SK-N-SH (cell line): ENCODE measurements at regions of chr14 and their contacts with region 1.

Region 1: GRCh38 chr14:71753126-71753830 is 179.0 kb upstream of the RGS6 start:
- DNase-seq: peak; percentile 84
- H3K4me3 ChIP-seq: peak overlapping the region; percentile 14 to 28; a peak in 2 of 4 replicates
- H3K27ac ChIP-seq: no peak overlapping the region
- H3K4me1 ChIP-seq: peaks cover 5 to 6% of the 10 kb centered on the region in 2 experiments; a peak in 2 of 4 replicates
- H3K27me3 ChIP-seq: no peaks in the 10 kb centered on the region
- CTCF ChIP-seq: peak; percentile 97
- EP300 ChIP-seq: peak in 1 of 2 experiments; percentile 7; a peak in 1 of 4 replicates
- RAD21 ChIP-seq: peak; percentile 100

Region 2: GRCh38 chr14:71138448-71139293 is 614.6 kb before region 1 on chr14:
- CTCF ChIA-PET with region 1: interaction called, 198 read pairs
- POLR2A ChIA-PET with region 1: no interaction called
- DNase-seq: peak; percentile 85
- H3K4me3 ChIP-seq: no peak overlapping the region; a peak in 1 of 4 replicates
- H3K27ac ChIP-seq: no peak overlapping the region
- H3K4me1 ChIP-seq: peaks cover 4 to 11% of the 10 kb centered on the region in 2 experiments; a peak in 2 of 4 replicates
- H3K27me3 ChIP-seq: no peaks in the 10 kb centered on the region
- CTCF ChIP-seq: peak; percentile 95
- EP300 ChIP-seq: no peak
- RAD21 ChIP-seq: peak; percentile 93

Region 3: GRCh38 chr14:71328183-71328582 is 425.1 kb before region 1 on chr14:
- CTCF ChIA-PET with region 1: interaction called, 44 read pairs
- POLR2A ChIA-PET with region 1: no interaction called
- DNase-seq: no peak
- H3K4me3 ChIP-seq: no peak overlapping the region
- H3K27ac ChIP-seq: no peak overlapping the region
- H3K4me1 ChIP-seq: peaks cover 8 to 19% of the 10 kb centered on the region in 2 experiments; a peak in 3 of 4 replicates
- H3K27me3 ChIP-seq: no peaks in the 10 kb centered on the region
- CTCF ChIP-seq: no peak
- EP300 ChIP-seq: no peak
- RAD21 ChIP-seq: no peak

Region 4: GRCh38 chr14:71720978-71721624 is 32.2 kb before region 1 on chr14:
- CTCF ChIA-PET with region 1: interaction called, 28 read pairs
- POLR2A ChIA-PET with region 1: no interaction called
- DNase-seq: peak; percentile 32
- H3K4me3 ChIP-seq: no peak overlapping the region
- H3K27ac ChIP-seq: no peak overlapping the region
- H3K4me1 ChIP-seq: peaks cover 12 to 24% of the 10 kb centered on the region in 2 experiments
- H3K27me3 ChIP-seq: no peaks in the 10 kb centered on the region
- CTCF ChIP-seq: peak; percentile 69
- EP300 ChIP-seq: no peak
- RAD21 ChIP-seq: peak; percentile 67

Region 5: DNA sequence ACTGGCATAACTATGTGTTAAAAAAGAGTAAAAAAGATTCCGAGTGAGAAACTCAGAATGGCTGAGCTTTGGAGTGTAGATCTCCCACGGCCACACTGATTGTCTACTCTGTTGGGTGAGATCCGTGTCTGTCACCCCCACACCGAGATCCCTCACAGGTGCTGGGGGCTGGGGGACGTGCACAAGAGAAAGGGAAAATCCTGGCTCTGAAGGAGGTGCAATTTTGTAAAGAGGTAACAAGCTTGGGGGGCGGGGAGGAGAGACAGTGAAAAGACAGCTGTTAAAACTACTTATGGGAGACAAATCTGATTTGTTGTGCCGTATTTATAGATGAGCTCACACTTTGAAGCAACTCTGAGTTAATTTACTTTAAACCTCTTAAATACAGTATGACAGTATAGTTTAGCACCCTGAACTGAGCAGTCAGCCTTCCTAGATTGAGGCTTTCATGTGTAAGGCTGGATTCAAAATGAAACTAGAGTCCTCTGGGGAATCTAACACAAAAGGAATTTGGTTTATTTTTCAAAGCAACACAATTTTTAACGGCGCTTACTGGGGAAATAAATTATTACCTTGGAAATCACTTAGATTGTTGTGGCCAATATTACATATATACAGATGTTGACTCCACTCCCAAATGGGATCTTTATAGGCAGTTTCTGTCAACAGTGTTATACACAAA is 11.6 kb after region 1 on chr14:
- CTCF ChIA-PET with region 1: interaction called, 17 read pairs
- POLR2A ChIA-PET with region 1: no interaction called
- DNase-seq: no peak
- H3K4me3 ChIP-seq: no peak overlapping the region
- H3K27ac ChIP-seq: no peak overlapping the region
- H3K4me1 ChIP-seq: no peaks in the 10 kb centered on the region; a peak in 1 of 4 replicates
- H3K27me3 ChIP-seq: no peaks in the 10 kb centered on the region; the same call in 1 of the 2 replicates
- CTCF ChIP-seq: no peak
- EP300 ChIP-seq: no peak
- RAD21 ChIP-seq: no peak